GM13976 (cell line): ENCODE measurements at regions of chr3 and their contacts with region 1.

Region 1: GRCh38 chr3:171566803-171567422 is 106.7 kb upstream of the TNIK start:
- DNase-seq: peak; percentile 48
- CTCF ChIP-seq: peak; percentile 52

Region 2: DNA sequence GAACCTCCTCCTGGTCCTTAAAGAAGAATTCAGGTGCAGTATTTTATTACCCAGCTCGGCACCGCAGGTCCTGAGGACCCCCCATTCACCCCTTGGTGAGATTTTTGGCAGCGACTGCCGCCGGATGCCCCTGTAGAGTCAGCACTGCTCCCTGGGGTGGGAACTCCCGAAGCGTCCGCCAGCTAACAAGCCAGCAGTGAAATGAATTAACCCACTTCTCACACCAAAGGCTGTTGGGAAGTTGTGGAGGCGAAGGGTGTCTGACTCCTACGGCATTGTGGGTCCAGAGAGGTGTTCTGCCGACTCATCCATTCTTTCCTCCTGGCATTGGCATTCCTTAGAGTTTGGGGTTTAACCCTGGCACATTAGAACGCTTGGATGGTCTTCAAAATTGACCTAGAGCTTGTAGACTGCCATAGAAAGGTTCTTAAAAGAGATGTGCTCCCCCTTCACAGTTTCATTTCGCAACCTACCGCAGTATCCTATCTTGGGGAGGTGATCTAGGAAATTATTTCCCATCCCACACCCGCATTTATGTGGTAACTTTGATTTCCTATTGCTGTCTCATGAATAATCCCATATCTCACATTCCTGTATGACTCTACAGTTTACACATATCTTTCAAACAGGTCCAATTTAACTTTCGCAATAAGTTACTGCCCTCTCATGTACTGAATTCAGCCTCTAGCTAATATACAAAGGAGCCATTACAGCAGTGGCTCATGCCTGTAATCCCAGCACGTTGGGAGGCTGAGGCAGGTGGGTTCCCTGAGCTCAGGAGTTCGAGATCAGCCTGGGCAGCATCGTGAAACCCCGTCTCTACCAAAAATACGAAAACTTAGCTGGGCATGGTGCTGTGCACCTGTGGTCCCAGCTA is 657.5 kb before region 1 on chr3:
- in situ Hi-C with region 1: no loop called
- DNase-seq: no peak
- CTCF ChIP-seq: no peak

Region 3: DNA sequence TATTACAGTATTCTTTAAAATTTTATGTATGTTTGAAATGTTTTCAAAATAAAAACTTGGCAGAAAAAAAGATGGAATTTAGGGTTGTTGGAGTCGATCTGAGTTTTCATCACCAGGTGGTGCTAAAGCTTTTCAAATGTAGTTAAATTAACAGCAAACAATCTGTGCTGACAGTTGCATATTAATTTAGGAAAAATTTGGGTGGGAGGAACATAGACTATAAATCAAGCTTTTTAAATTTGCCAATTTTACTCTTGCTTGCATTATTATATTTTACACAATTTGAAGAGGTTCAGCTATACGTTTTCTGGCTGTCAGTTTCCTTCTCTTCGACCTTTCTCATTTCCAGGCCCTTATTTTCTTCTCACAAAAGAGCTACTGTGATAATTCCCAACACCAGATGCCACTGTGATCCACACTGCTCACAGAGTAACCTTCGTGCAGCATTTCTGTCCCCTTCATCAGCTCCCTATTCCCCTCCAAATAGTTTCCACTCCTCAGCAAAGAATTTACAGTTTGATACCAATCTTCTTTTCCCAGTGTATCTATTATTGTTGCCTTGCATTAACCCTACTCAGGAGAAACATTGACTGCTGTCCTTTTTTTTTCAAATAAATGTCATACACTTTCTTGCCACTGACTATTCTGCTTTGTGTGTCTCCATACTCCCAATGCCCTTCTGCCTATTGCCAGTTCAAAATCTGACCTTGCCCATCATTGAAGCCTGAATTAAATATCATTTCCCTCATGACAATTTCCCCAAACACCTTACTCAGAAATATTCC is 605.1 kb before region 1 on chr3:
- in situ Hi-C with region 1: loop called (anchors 10 kb)
- DNase-seq: no peak
- CTCF ChIP-seq: peak; percentile 28

Region 4: DNA sequence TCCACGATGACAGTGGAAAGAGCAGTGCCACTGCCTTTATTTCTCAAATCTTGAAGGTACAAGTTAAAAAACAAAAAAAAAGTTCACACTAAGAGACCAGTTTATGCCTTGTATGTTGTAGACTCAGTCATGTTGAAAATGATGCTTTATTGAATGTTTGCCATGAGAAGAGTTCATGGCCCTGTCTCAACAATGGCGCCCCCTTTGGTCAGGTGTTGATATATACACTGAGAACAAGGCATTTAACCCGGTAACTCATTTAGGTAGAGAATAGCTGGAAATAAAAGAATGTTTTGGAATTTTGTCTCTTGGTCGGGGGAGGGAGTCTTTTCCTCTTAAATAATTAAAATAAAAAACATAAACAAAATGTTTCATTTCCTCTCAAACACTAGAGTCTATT is 394.8 kb before region 1 on chr3:
- in situ Hi-C with region 1: no loop called
- DNase-seq: no peak
- CTCF ChIP-seq: no peak